ENCODE measurements at regions of chr15 and their contacts with region 1.

Region 1: DNA sequence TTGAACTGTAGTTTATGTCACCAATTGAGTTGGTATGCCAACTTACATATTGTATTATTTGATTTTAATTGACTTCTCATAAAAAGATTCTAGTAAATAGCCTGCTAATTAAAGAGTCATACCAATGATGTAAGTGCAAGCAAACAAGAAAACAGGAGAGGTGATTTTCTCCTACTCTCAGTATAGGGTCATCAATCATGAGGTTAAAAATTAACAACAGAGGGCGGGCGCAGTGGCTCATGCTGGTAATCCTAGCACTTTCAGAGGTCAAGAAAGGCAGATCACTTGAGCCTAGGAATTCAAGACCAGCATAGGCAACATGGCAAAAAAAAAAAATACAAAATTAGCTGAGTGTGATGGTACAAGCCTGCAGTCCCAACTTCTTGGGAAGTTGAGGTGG is 108.7 kb downstream of the MYO9A start:
- DNase-seq: no peak
- ATAC-seq: no peak
- H3K4me3 ChIP-seq: no peak overlapping the region
- H3K27ac ChIP-seq: no peak overlapping the region
- H3K4me1 ChIP-seq: no peaks in the 10 kb centered on the region
- H3K27me3 ChIP-seq: no peaks in the 10 kb centered on the region
- CTCF ChIP-seq: no peak

Region 2: GRCh38 chr15:72020799-72021198 is 11.6 kb after region 1 on chr15:
- CTCF ChIA-PET with region 1: no interaction called
- POLR2A ChIA-PET with region 1: interaction called, 14 read pairs
- in situ Hi-C with region 1: no loop called
- intact Hi-C with region 1: no loop called
- DNase-seq: no peak
- ATAC-seq: no peak
- H3K4me3 ChIP-seq: no peak overlapping the region
- H3K27ac ChIP-seq: no peak overlapping the region
- H3K4me1 ChIP-seq: no peaks in the 10 kb centered on the region
- H3K27me3 ChIP-seq: no peaks in the 10 kb centered on the region
- CTCF ChIP-seq: no peak

Region 3: DNA sequence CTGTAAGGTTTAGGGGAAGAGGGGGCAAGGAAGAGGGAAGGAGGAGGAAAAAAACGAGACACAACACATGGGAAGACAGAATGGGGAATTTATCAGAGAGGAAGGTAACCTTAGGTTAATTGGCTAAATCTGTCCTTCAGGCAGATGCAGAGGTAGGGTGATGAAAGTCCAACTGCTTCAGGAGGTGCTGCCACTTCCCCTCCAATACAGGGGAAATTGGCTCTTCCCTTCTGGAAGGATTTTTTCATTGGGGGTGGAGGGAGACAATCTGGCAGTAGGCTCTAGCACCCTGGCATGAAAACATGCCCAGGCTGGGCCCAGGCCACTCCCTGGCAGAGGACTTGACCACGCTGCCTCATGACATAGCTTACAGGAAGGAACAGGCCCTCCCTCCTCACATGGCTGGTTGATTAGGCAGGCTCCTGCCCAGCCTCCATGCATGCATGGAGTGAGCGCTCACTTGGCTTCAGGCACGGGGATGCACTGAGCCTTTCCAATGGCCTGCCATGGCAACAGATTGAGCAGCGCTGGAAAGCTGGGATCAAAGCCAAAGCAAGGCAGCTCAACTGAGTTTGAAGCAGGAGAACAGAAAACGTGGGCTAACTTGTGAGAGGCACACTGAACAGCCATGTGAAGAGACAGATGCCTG is 194.1 kb after region 1 on chr15:
- CTCF ChIA-PET with region 1: no interaction called
- POLR2A ChIA-PET with region 1: no interaction called
- in situ Hi-C with region 1: no loop called
- intact Hi-C with region 1: no loop called
- DNase-seq: no peak
- ATAC-seq: no peak
- H3K4me3 ChIP-seq: no peak overlapping the region
- H3K27ac ChIP-seq: peak overlapping the region; percentile 49
- H3K4me1 ChIP-seq: peaks cover 28% of the 10 kb centered on the region
- H3K27me3 ChIP-seq: no peaks in the 10 kb centered on the region
- CTCF ChIP-seq: no peak

Measured in Panc1 (cell line).